ENCODE measurements at regions of chr1 and their contacts with region 1.

Region 1: GRCh38 chr1:33633019-33633801 is 160.8 kb downstream of the ZSCAN20 start:
- DNase-seq: peak; percentile 88
- H3K4me3 ChIP-seq: peak overlapping the region in 1 of 2 experiments; percentile 39; a peak in 1 of 4 replicates
- H3K27ac ChIP-seq: no peak overlapping the region
- H3K4me1 ChIP-seq: no peaks in the 10 kb centered on the region; a peak in 1 of 4 replicates
- H3K27me3 ChIP-seq: no peaks in the 10 kb centered on the region
- CTCF ChIP-seq: peak; percentile 95
- EP300 ChIP-seq: no peak
- RAD21 ChIP-seq: peak; percentile 83

Region 2: GRCh38 chr1:33616773-33617172 is 16.4 kb before region 1 on chr1:
- CTCF ChIA-PET with region 1: interaction called, 52 read pairs
- POLR2A ChIA-PET with region 1: no interaction called
- DNase-seq: no peak
- H3K4me3 ChIP-seq: no peak overlapping the region
- H3K27ac ChIP-seq: no peak overlapping the region
- H3K4me1 ChIP-seq: peaks cover 0 to 10% of the 10 kb centered on the region in 2 experiments; a peak in 1 of 4 replicates
- H3K27me3 ChIP-seq: no peaks in the 10 kb centered on the region; the same call in 1 of the 2 replicates
- CTCF ChIP-seq: no peak
- EP300 ChIP-seq: no peak
- RAD21 ChIP-seq: no peak

Region 3: DNA sequence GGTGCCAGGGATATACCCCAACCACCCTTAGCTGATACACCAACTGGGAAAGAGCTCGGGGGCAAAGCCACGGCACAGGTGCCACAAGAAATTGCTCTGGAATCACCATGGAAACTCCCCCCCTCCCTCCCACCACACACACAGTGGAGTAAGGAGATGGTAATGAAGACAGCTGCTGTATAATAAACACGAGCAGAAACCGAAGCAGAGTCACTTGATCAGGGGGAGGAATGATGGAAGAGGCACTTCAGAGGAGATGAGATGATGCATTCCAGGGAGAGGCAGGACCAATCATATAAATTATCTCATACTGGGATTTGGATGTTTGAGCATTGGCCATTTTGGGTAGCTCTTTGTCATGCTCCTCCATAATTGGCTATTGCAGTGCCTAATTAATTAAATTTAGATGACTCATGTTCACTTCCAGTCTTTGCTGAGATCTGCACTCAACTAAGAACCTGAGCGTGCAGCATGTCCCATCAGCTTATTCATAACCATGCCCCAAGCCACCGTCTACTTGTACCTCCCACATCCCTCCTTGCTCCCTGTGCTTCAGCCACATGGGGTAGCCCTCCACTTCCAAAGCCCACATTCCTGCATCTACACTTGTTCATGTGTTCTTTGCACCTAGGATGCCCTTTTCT is 28.7 kb after region 1 on chr1:
- CTCF ChIA-PET with region 1: interaction called, 54 read pairs
- POLR2A ChIA-PET with region 1: no interaction called
- DNase-seq: no peak
- H3K4me3 ChIP-seq: no peak overlapping the region
- H3K27ac ChIP-seq: no peak overlapping the region
- H3K4me1 ChIP-seq: no peaks in the 10 kb centered on the region
- H3K27me3 ChIP-seq: no peaks in the 10 kb centered on the region
- CTCF ChIP-seq: no peak
- EP300 ChIP-seq: no peak
- RAD21 ChIP-seq: no peak

Region 4: GRCh38 chr1:33709174-33709782 is 76.1 kb after region 1 on chr1:
- CTCF ChIA-PET with region 1: interaction called, 12 read pairs
- POLR2A ChIA-PET with region 1: no interaction called
- DNase-seq: no peak
- H3K4me3 ChIP-seq: no peak overlapping the region
- H3K27ac ChIP-seq: no peak overlapping the region
- H3K4me1 ChIP-seq: peaks cover 0 to 5% of the 10 kb centered on the region in 2 experiments; a peak in 1 of 4 replicates
- H3K27me3 ChIP-seq: no peaks in the 10 kb centered on the region
- CTCF ChIP-seq: no peak
- EP300 ChIP-seq: no peak
- RAD21 ChIP-seq: no peak

Region 5: DNA sequence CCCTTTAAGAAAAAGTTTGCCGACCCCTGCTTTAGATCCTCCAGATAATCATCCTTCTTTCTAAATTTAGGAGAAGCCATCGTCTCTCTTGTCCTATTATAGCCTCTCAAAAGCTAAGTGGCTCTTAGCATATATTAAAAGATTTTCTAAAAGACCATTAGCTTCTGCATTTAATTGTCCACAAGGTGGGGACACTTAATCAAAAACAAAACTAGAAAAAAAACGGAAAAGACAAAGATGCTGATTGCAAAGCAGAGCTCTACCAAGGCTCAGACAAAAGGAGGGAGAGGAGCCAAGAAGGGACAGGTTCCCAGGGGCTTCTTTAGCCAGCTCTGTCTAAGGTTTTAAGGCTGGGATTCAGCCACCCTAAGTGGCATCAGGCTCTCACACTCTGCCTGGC is 102.4 kb after region 1 on chr1:
- CTCF ChIA-PET with region 1: interaction called, 21 read pairs
- POLR2A ChIA-PET with region 1: no interaction called
- DNase-seq: peak; percentile 54
- H3K4me3 ChIP-seq: no peak overlapping the region
- H3K27ac ChIP-seq: no peak overlapping the region
- H3K4me1 ChIP-seq: no peaks in the 10 kb centered on the region; a peak in 1 of 4 replicates
- H3K27me3 ChIP-seq: no peaks in the 10 kb centered on the region
- CTCF ChIP-seq: no peak
- EP300 ChIP-seq: no peak
- RAD21 ChIP-seq: peak; percentile 78

Region 6: DNA sequence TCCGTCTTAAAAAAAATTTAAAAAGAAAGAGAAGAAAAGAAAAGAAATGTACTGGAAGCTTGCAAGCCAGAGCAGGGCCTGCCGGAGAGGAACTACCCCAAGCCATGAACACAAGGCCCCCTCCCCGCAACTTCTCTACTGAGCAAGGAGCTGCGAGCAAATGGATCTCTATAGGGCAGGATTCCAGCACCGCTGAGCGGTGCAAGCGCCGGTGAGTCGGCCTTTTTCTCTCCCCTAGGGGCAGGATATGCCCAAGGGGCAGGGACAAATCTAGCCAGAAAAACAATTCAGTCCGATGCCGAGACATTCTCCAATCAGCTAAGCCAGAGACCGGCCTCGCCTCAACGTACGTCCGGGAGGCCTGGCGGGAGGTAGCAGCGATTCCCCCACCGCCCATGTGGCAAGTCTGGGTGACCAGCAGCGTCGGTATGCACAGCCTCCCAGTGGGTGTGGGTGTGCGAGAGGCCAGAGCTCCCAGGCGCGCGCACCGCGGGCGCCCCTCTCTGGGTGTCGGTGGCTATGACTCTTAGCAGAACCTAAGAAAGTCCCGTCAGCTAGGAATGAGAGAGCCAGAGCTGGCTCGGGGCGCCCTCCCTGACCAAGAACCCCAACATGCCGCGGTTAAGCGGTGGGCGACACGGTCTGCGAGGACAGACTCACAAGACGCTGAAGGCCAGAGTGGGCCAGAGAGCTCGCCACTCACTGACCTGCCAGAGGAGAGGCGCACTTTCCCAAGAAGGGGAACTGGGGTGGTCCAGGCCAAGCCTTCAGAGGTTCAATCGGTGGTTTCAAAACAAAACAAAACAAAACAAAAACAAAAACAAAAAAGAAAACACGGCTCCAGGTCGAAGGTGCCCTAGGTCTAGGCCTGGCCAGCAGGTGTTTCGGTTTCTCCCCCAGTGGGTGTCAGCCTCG is 529.9 kb after region 1 on chr1:
- CTCF ChIA-PET with region 1: interaction called, 64 read pairs
- POLR2A ChIA-PET with region 1: no interaction called
- DNase-seq: peak; percentile 89
- H3K4me3 ChIP-seq: peak overlapping the region; percentile 24 to 53
- H3K27ac ChIP-seq: no peak overlapping the region
- H3K4me1 ChIP-seq: peaks cover 0 to 15% of the 10 kb centered on the region in 2 experiments; a peak in 1 of 4 replicates
- H3K27me3 ChIP-seq: no peaks in the 10 kb centered on the region
- CTCF ChIP-seq: peak; percentile 55
- EP300 ChIP-seq: no peak
- RAD21 ChIP-seq: peak; percentile 88

Region 7: GRCh38 chr1:34603594-34603993 is 970.4 kb after region 1 on chr1:
- CTCF ChIA-PET with region 1: interaction called, 78 read pairs
- POLR2A ChIA-PET with region 1: no interaction called
- DNase-seq: no peak
- H3K4me3 ChIP-seq: no peak overlapping the region
- H3K27ac ChIP-seq: no peak overlapping the region
- H3K4me1 ChIP-seq: no peaks in the 10 kb centered on the region
- H3K27me3 ChIP-seq: no peaks in the 10 kb centered on the region
- CTCF ChIP-seq: no peak
- EP300 ChIP-seq: no peak
- RAD21 ChIP-seq: no peak

Measured in SK-N-SH (cell line).